ENCODE measurements at regions of chr19 and their contacts with region 1.

Region 1: DNA sequence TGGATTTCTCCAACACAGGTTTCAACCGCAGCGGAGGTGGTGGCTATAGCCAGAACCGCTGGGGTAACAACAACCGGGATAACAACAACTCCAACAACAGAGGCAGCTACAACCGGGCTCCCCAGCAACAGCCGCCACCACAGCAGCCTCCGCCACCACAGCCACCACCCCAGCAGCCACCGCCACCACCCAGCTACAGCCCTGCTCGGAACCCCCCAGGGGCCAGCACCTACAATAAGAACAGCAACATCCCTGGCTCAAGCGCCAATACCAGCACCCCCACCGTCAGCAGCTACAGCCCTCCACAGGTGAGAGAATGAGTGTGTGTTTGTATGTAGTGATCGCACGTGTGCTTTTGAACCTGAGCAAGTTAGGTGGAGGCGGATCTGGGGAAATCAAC is 6.0 kb upstream of the CCDC97 start:
- DNase-seq: no peak
- ATAC-seq: no peak
- H3K4me3 ChIP-seq: no peak overlapping the region
- H3K27ac ChIP-seq: no peak overlapping the region
- H3K4me1 ChIP-seq: peaks cover 9% of the 10 kb centered on the region
- CTCF ChIP-seq: no peak
- EP300 ChIP-seq: no peak
- POLR2A ChIP-seq: no peak
- RAD21 ChIP-seq: no peak

Region 2: DNA sequence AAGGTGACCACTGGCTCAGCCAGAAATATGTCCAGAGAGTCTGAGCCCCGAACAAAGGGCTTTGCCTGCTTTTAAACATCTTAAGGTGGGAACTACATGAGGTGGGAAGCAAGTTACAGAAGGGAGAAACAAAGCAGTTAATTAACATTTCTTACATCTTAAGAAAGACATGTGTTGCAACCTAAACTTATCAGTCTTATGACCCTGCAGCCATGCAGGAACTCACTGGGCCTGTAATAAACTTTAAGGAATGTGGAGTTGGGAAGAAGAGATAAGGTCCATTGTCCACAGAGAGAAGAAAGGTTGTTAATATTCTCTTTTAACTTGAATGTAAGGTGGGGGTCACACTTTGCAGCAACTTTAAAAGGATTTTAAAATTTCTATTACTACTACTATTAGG is 375.1 kb before region 1 on chr19:
- CTCF ChIA-PET with region 1: no interaction called
- POLR2A ChIA-PET with region 1: no interaction called
- DNase-seq: no peak
- ATAC-seq: no peak
- H3K4me3 ChIP-seq: no peak overlapping the region
- H3K27ac ChIP-seq: no peak overlapping the region
- H3K4me1 ChIP-seq: peaks cover 11% of the 10 kb centered on the region
- CTCF ChIP-seq: no peak
- EP300 ChIP-seq: no peak
- POLR2A ChIP-seq: no peak
- RAD21 ChIP-seq: no peak

Region 3: DNA sequence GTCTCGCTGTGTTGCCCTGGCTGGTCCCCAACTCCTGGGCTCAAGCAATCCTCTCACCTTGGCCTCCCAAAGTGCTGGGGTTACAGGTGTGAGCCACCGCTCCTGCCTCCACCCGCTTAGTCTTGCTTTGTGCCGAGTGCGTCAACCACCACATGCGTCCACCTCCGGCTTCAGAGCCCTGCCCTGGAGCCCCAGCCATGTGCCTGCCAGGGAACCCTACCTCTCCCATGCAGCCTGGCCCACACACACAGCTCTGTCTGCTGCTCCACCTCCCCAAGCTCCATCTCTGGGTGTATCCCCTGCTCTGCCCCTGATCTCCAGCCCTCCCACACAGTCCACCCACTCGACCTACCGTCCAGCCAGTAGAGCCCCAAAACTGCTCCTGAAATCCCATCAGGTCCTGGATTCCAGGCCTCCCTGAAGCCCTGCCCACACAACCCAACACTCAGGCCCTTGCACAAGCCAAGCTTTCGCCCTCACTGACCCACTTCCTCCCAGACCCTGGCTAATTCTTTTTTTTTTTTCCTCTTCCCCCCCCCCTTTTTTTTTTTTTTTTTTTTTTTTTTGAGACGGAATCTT is 180.1 kb before region 1 on chr19:
- CTCF ChIA-PET with region 1: interaction called, 25 read pairs
- POLR2A ChIA-PET with region 1: no interaction called
- DNase-seq: no peak
- ATAC-seq: no peak
- H3K4me3 ChIP-seq: no peak overlapping the region
- H3K27ac ChIP-seq: no peak overlapping the region
- H3K4me1 ChIP-seq: peaks cover 10% of the 10 kb centered on the region
- CTCF ChIP-seq: no peak
- EP300 ChIP-seq: no peak
- POLR2A ChIP-seq: no peak
- RAD21 ChIP-seq: no peak

Region 4: GRCh38 chr19:41411968-41412265 is 108.0 kb after region 1 on chr19:
- CTCF ChIA-PET with region 1: no interaction called
- POLR2A ChIA-PET with region 1: no interaction called
- DNase-seq: no peak
- ATAC-seq: no peak; a peak in 1 of 6 replicates
- H3K4me3 ChIP-seq: no peak overlapping the region
- H3K27ac ChIP-seq: no peak overlapping the region
- H3K4me1 ChIP-seq: peaks cover 12% of the 10 kb centered on the region
- CTCF ChIP-seq: no peak
- EP300 ChIP-seq: no peak
- POLR2A ChIP-seq: no peak
- RAD21 ChIP-seq: no peak

Region 5: DNA sequence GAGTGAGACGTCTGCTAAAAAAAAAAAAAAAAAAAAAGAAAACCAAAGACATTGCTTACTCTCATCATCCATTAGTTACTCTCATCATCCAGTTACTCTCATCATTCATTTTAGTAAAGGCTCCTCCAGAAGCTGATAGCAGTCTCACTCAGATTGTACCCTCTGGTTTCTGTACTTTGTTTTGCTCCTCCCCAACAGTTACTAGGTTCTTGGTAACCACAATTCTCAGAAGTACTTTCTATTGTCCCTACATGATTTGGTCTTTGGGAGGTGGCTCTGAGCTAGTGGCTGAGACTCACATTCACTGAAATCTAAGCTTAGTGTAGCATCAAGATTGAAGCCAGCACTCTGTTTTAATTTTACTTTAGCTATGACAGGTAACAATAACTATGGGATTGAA is 153.3 kb after region 1 on chr19:
- CTCF ChIA-PET with region 1: no interaction called
- POLR2A ChIA-PET with region 1: no interaction called
- DNase-seq: no peak
- ATAC-seq: no peak
- H3K4me3 ChIP-seq: no peak overlapping the region
- H3K27ac ChIP-seq: no peak overlapping the region
- H3K4me1 ChIP-seq: no peaks in the 10 kb centered on the region
- CTCF ChIP-seq: no peak
- EP300 ChIP-seq: no peak
- POLR2A ChIP-seq: no peak
- RAD21 ChIP-seq: no peak

Region 6: GRCh38 chr19:41646589-41647204 is 342.7 kb after region 1 on chr19:
- CTCF ChIA-PET with region 1: no interaction called
- POLR2A ChIA-PET with region 1: no interaction called
- DNase-seq: peak; percentile 43 to 66
- ATAC-seq: peak in 1 of 2 experiments; percentile 56; a peak in 3 of 6 replicates
- H3K4me3 ChIP-seq: no peak overlapping the region
- H3K27ac ChIP-seq: no peak overlapping the region
- H3K4me1 ChIP-seq: no peaks in the 10 kb centered on the region
- CTCF ChIP-seq: peak; percentile 67
- EP300 ChIP-seq: no peak
- POLR2A ChIP-seq: no peak
- RAD21 ChIP-seq: 0 out of 5 replicates have a peak, but pooled peaks of 1 of the 2 experiments have one; percentile 7